CD8-positive, alpha-beta memory T cell (primary cell): ENCODE measurements at regions of chr4 and their contacts with region 1.

Region 1: DNA sequence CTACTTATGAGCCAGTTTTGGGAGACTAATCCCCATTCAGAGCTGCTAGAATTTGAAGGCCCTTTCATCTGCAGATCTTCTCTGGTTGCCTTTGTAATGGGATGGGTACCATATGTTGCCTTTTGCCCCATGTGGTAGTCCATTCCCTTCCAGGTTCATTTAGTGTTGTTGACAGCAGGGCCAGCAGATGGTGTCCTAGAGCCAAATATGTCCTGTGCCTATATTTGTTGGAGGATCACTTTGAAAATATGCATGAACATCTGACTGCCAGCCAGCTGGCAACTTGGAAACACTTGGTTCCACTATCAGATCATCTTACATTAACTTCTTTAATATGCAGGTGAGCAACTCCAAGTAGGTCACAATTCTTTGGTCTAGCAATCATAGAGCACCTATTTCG is 30.4 kb downstream of the CFAP299 start:
- DNase-seq: peak; percentile 24 to 73 (median 43)
- H3K4me3 ChIP-seq: no peak overlapping the region
- H3K4me3 Mint-ChIP-seq: no peak overlapping the region
- H3K27ac ChIP-seq: no peak overlapping the region
- H3K27ac Mint-ChIP-seq: peak overlapping the region in 1 of 8 donors; percentile 1
- H3K4me1 ChIP-seq: peaks cover 5% of the 10 kb centered on the region
- H3K4me1 Mint-ChIP-seq: peaks cover 6 to 7% (median 6%) of the 10 kb centered on the region in 3 donors
- H3K27me3 ChIP-seq: no peaks in the 10 kb centered on the region
- H3K27me3 Mint-ChIP-seq: no peaks in the 10 kb centered on the region

Region 2: DNA sequence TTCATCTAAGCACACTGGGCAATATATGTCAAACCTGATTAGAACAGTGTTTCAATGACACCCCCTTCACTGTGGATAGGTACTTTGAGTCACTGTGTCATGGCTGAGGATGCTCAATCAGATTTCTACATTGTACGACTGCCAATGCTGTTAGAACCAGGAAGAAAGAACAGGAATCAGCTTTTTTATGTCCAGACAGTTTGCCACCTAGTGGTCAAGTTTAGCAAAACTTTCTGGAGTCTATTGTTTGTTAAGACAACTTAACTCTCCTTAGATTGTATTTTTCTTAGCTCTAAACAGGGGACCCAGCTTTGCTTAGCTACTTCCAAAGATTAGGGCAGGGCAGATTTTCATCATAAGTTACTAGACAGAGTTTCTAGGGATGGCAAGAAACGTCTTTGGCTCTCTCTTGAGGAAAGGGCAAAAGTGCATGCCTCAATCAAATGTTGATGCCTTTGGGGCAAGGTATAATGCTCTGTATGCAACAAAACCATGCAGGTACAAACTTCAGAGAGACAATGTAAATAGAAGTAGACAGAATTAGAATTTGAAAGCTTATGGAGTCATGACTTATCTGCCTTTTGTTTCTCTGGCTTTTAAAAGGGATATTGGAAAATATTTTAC is 624.1 kb after region 1 on chr4:
- CTCF ChIA-PET with region 1: interaction called, 33 read pairs
- POLR2A ChIA-PET with region 1: no interaction called
- DNase-seq: peak in 3 of 5 donors; percentile 23 to 45 (median 38)
- H3K4me3 ChIP-seq: no peak overlapping the region
- H3K4me3 Mint-ChIP-seq: no peak overlapping the region
- H3K27ac ChIP-seq: no peak overlapping the region
- H3K27ac Mint-ChIP-seq: no peak overlapping the region
- H3K4me1 ChIP-seq: no peaks in the 10 kb centered on the region
- H3K4me1 Mint-ChIP-seq: peaks cover 0 to 3% (median 2%) of the 10 kb centered on the region in 3 donors
- H3K27me3 ChIP-seq: no peaks in the 10 kb centered on the region
- H3K27me3 Mint-ChIP-seq: peaks cover 0 to 30% of the 10 kb centered on the region in 2 donors